Caco-2 (cell line): ENCODE measurements at regions of chrX and their contacts with region 1.

Region 1: DNA sequence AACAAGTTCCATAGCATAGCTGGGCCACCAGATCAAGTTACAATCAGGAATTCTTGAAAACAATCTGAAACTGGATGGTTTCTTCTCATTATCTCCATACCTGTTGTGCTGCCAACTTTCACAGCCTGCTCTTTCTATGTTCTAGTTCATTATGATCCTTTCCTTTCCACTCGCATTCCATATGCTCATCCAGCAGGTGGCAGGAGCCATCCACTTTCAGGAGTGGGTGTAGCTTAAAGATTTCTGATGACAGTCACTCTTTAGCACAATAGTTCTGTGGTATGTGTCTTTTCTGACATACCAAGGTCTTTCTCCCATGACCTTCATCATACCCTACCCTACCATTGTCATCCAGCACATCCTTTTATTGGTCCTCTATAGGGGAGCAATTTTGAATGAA is 46.4 kb downstream of the PAGE2 start:
- DNase-seq: peak; percentile 42 to 47
- H3K4me3 ChIP-seq: no peak overlapping the region
- H3K4me3 Mint-ChIP-seq: no peak overlapping the region
- H3K27ac Mint-ChIP-seq: no peak overlapping the region
- H3K4me1 ChIP-seq: no peaks in the 10 kb centered on the region
- H3K4me1 Mint-ChIP-seq: no peaks in the 10 kb centered on the region
- H3K27me3 ChIP-seq: no peaks in the 10 kb centered on the region
- H3K27me3 Mint-ChIP-seq: no peaks in the 10 kb centered on the region
- CTCF ChIP-seq: peak; percentile 25 to 57

Region 2: GRCh38 chrX:55160685-55161552 is 25.7 kb after region 1 on chrX:
- CTCF ChIA-PET with region 1: no interaction called
- POLR2A ChIA-PET with region 1: no interaction called
- intact Hi-C with region 1: loop called (anchors 1 kb)
- DNase-seq: peak; percentile 86 to 87
- H3K4me3 ChIP-seq: peak overlapping the region; percentile 70
- H3K4me3 Mint-ChIP-seq: peak overlapping the region; percentile 98
- H3K27ac Mint-ChIP-seq: peak overlapping the region; percentile 98
- H3K4me1 ChIP-seq: peaks cover 3% of the 10 kb centered on the region; the same call in 1 of the 2 replicates
- H3K4me1 Mint-ChIP-seq: no peaks in the 10 kb centered on the region
- H3K27me3 ChIP-seq: no peaks in the 10 kb centered on the region
- H3K27me3 Mint-ChIP-seq: no peaks in the 10 kb centered on the region
- CTCF ChIP-seq: peak; percentile 44 to 79

Region 3: GRCh38 chrX:55210931-55211681 is 75.9 kb after region 1 on chrX:
- CTCF ChIA-PET with region 1: no interaction called
- POLR2A ChIA-PET with region 1: no interaction called
- intact Hi-C with region 1: loop called (anchors 1 kb)
- DNase-seq: peak; percentile 43 to 57
- H3K4me3 ChIP-seq: peak overlapping the region; percentile 28
- H3K4me3 Mint-ChIP-seq: peak overlapping the region; percentile 68
- H3K27ac Mint-ChIP-seq: no peak overlapping the region
- H3K4me1 ChIP-seq: no peaks in the 10 kb centered on the region
- H3K4me1 Mint-ChIP-seq: no peaks in the 10 kb centered on the region
- H3K27me3 ChIP-seq: no peaks in the 10 kb centered on the region
- H3K27me3 Mint-ChIP-seq: no peaks in the 10 kb centered on the region
- CTCF ChIP-seq: peak in 1 of 2 experiments; percentile 18

Region 4: GRCh38 chrX:55312655-55313054 is 177.5 kb after region 1 on chrX:
- CTCF ChIA-PET with region 1: interaction called, 3 read pairs
- POLR2A ChIA-PET with region 1: no interaction called
- intact Hi-C with region 1: loop called (anchors 10 kb)
- DNase-seq: no peak
- H3K4me3 ChIP-seq: no peak overlapping the region
- H3K4me3 Mint-ChIP-seq: no peak overlapping the region
- H3K27ac Mint-ChIP-seq: no peak overlapping the region
- H3K4me1 ChIP-seq: no peaks in the 10 kb centered on the region
- H3K4me1 Mint-ChIP-seq: no peaks in the 10 kb centered on the region
- H3K27me3 ChIP-seq: no peaks in the 10 kb centered on the region
- H3K27me3 Mint-ChIP-seq: peaks cover 2% of the 10 kb centered on the region
- CTCF ChIP-seq: no peak

Region 5: GRCh38 chrX:55717521-55718497 is 582.6 kb after region 1 on chrX and contains the start of gene RRAGB:
- CTCF ChIA-PET with region 1: interaction called, 3 read pairs
- POLR2A ChIA-PET with region 1: no interaction called
- intact Hi-C with region 1: loop called (anchors 5 kb)
- DNase-seq: peak; percentile 92 to 95
- H3K4me3 ChIP-seq: peak within 1 kb of the TSS; percentile 79
- H3K4me3 Mint-ChIP-seq: peak within 1 kb of the TSS; percentile 97
- H3K27ac Mint-ChIP-seq: peak within 1 kb of the TSS; percentile 56
- H3K4me1 ChIP-seq: no peaks in the 10 kb centered on the region
- H3K4me1 Mint-ChIP-seq: peaks cover 7% of the 10 kb centered on the region
- H3K27me3 ChIP-seq: no peaks in the 10 kb centered on the region
- H3K27me3 Mint-ChIP-seq: no peaks in the 10 kb centered on the region
- CTCF ChIP-seq: peak; percentile 59 to 67
- total RNA-seq, gene RRAGB: 9.5 and 10.8 TPM in 2 replicates